Right ventricle myocardium inferior (tissue), 1 donor: ENCODE measurements at regions of chr1 and their contacts with region 1.

Region 1: GRCh38 chr1:22865736-22866135 is 106.9 kb downstream of the LACTBL1 start:
- DNase-seq: no peak
- ATAC-seq: no peak

Region 2: DNA sequence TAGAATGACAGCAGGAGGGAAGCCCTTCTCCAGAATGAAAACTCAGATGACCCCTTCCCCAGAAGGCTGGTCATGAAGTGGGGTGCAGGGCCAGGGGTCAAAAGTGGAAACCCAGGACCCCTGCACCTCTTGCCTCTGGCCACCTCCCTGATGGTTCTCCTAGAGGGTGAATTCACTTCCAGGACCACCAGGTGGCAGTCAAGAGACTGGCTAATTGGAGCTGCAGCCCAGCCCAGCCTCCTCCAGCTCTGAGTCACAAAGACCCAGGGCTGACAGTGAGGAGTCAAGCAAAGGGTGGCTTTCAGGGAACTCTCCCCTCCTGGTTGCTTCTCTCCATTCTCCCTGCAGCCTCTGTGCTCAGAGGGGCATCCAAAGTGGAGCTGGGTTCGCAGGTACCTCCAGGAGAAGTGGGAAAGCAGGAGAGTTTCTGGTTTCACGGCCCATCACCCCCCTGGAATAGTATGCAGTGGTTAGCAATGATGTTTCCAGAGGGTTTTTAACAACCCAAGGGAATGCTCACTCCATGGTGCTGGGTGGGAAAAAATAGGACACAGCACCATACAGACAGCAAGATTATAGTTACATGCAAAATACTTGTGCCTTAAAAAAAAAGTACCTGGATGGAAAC is 161.2 kb before region 1 on chr1:
- intact Hi-C with region 1: no loop called
- DNase-seq: peak; percentile 84
- ATAC-seq: peak; percentile 87

Region 3: GRCh38 chr1:22831729-22832413 is 33.9 kb before region 1 on chr1:
- intact Hi-C with region 1: no loop called
- DNase-seq: no peak
- ATAC-seq: no peak

Region 4: DNA sequence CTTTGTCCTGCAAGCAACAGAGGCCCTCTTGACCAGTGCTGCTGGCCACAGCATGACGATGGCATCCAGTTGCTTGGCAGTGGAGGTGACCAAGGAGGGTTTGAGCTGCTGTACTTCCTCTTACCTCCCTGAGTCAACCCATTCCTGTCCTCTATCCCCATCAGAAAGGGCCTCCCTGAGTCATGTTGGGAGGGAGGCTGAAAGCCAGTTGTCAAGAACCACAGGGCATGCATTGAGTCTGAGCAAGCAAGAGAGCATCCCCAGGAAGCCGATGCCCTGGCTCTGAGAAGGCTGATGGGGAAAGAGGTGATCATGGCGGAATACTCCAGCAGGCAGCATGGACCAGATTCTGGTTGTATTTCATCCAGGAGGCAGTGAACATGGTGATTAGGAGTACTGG is 37.4 kb after region 1 on chr1:
- intact Hi-C with region 1: loop called (anchors 2 kb)
- DNase-seq: no peak
- ATAC-seq: no peak